Cardiac septum (tissue), 1 donor: ENCODE measurements at regions of chr4 and their contacts with region 1.

Region 1: GRCh38 chr4:184538023-184538599 is 63.8 kb upstream of the IRF2 start:
- DNase-seq: peak; percentile 91

Region 2: GRCh38 chr4:184263910-184264732 is 274.0 kb before region 1 on chr4:
- intact Hi-C with region 1: loop called (anchors 2 kb)
- DNase-seq: peak; percentile 94

Region 3: DNA sequence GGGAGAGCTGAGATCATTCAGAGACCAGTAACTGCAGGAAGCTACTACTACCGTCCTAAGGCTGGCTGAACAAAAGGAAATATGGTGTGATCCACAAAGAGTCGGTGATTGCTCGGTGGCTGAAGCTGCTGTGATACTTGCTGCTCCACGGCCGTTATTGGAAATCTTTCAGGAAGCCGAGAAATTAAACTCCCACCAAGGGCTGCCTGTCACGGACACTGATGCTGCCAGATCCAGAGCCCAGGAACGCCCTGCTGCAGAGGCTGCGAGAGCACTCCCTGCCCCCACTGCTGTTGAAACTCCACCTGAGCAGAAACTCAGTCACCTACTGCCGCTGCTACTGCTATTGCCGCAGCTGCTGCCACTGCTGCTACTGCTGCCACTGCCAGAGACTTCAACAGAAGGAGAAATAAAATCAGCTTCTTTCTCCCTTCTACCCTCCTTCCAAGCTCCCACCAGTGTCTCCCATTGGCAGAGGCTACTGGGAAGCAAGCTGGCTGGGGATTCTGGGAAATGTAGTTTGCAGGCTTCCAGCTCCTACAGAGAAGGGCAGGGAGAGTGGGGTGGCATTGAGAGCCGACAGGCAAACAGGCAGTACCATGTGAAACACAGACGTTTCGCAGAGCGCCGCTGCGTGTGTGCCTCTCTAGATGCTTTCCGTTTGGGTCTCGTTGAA is 194.5 kb before region 1 on chr4:
- intact Hi-C with region 1: loop called (anchors 5 kb)
- DNase-seq: peak; percentile 90

Region 4: GRCh38 chr4:184417802-184418511 is 120.2 kb before region 1 on chr4:
- intact Hi-C with region 1: loop called (anchors 10 kb)
- DNase-seq: no peak

Region 5: DNA sequence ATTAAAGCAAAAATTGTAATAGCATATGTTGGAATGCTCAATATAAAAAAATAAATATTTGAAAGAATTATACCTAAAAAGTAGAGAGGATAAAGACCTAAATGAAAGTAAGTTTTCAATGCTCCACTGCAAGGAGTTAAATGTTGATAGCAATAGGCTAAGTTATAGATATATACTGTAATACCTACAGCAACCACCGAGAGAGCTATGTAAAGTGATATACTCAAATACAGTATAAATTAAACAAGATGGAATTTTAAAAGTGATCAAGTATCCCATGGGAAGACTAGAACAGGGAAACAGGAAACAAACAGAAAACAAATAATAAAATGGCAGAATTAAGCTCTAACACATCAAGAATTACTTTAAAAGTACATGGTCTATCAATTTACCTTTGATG is 37.2 kb after region 1 on chr4:
- intact Hi-C with region 1: no loop called
- DNase-seq: no peak

Region 6: DNA sequence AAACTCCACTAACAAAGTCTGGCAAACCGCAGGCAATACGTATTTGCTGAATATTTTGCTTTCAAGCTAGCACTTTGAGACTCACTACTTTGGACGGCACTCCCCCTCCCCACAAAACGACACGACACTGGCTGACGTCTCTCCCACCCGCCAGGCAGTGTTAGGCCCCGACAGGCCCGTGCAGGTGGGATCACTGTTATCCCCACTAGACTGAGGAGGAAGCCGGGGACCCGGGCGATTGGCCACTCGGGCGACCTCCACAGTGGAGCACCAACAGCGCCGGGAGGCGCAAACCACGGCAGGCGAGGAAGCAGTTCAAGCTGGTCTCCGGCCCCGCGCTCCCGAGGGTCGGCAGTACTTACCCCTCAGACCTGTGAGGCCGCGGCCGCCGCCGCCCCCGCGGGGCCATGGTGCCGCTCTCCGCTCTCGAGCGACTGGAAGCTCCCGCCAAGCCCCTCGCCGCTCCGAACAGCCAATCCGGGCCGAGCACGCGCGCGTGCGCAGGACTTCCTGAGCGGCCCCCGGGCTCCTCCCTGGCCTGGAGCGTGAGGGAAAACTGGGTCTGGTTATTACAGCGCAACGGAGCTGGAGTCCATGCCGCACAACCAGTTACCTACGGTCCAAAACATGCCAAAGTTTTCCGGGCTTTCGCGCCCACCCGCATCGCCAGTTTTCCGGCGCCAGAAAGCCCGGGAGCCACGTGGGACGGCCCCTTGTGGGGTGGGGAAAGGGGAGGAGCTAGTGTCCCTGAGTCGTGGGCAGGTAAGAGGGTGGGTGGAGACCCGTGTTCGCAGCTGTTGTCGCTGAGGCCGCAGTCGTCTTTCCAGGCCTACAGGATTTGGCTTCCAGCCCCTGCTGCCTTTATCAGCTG is 195.8 kb after region 1 on chr4 and contains the start of gene CENPU:
- intact Hi-C with region 1: loop called (anchors 10 kb)
- DNase-seq: peak; percentile 95
- total RNA-seq, gene CENPU: 1.5 TPM